ENCODE measurements at regions of chr1 and their contacts with region 1.

Region 1: GRCh38 chr1:24688621-24689195 is 45.6 kb downstream of the SRRM1 start:
- DNase-seq: peak; percentile 80
- H3K4me3 Mint-ChIP-seq: no peak overlapping the region
- H3K27ac Mint-ChIP-seq: peak overlapping the region; percentile 13
- H3K4me1 Mint-ChIP-seq: peaks cover 9% of the 10 kb centered on the region
- H3K27me3 Mint-ChIP-seq: no peaks in the 10 kb centered on the region
- CTCF ChIP-seq: peak; percentile 87

Region 2: DNA sequence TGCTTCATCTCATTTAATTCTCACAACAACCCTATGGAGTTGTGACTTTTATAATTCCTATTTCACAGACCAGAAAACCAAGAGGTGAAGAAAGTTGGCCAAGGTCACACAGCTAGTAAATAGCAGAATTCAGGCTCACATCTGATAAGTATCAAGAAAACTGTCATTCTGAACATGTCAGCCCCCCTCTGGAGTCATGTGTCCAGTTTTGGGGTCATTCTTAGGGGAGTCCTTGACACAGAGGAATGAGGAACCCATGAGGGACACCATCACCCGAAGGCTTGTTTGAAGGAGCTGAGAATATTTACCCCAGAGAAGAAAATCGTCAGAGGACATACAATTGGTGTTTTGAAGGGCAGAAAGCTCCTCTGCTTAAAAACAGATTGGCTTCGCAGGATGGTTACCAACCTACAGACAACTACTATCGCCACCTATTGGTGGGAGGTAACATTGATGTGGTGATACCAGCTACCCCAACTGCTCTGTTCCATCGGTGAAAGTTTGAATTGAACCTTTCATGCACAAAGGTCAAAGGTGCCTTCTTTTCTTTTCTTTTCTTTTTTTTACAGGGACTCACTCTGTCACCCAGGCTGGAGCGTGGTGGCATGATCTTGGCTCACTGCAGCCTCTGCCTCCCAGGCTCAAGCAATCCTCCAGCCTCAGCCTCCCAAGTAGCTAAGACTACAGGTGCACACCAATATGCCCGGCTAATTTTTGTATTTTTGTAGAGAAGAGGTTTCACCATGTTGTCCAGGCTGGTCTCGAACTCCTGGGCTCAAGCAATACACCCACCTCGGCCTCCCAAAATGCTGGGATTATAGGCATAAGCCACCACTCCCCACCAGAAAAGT is 101.5 kb before region 1 on chr1:
- CTCF ChIA-PET with region 1: no interaction called
- POLR2A ChIA-PET with region 1: no interaction called
- intact Hi-C with region 1: no loop called
- DNase-seq: peak; percentile 72
- H3K4me3 Mint-ChIP-seq: no peak overlapping the region
- H3K27ac Mint-ChIP-seq: no peak overlapping the region
- H3K4me1 Mint-ChIP-seq: peaks cover 9% of the 10 kb centered on the region
- H3K27me3 Mint-ChIP-seq: no peaks in the 10 kb centered on the region
- CTCF ChIP-seq: peak; percentile 70

Region 3: DNA sequence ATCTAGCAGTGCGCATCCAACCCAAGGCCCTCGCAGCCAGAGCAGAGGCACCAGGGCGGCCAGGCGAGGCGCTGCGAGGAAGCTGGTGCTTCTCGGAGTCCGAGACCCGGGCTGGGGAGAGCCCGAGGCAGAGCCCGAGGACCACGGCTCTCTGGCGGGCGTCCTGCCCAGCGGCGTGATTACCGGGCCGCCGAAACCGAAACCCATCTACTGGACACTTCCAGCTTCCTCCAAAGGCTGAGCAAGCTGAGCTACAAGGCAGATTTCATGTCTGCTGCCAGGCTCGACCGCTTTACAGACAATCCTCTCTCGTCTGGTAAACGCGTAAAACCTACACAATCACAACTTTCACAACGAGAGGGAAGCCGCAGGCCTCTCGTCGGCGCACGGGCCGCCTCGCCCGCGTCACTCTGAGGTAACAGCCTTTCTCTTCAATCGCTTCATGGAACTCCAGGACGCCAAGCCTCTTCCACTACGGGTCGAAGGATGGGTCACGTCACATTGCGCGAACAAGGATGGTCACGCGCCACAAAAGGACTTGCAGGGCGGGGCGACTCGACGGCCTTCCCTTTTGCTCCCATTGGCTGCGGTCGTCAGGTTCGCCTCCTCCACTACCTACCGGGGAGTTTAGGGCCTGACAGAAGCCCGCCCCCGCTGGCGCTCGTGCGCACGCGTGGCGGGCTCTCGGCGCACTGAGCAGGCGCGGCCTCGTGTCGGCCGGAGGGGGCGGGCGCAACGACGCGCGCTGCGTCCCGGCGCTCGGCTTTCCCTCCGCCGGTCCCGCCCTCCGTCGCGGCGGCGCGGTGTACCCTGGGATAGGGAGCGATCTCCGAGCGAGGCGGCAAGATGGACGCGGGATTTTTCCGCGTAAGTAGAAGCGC is 46.0 kb before region 1 on chr1 and contains the start of gene SRRM1:
- CTCF ChIA-PET with region 1: interaction called, 4 read pairs
- POLR2A ChIA-PET with region 1: interaction called, 18 read pairs
- intact Hi-C with region 1: no loop called
- DNase-seq: peak; percentile 100
- H3K4me3 Mint-ChIP-seq: peak within 1 kb of the TSS; percentile 98
- H3K27ac Mint-ChIP-seq: peak within 1 kb of the TSS; percentile 99
- H3K4me1 Mint-ChIP-seq: peaks cover 25% of the 10 kb centered on the region
- H3K27me3 Mint-ChIP-seq: no peaks in the 10 kb centered on the region
- CTCF ChIP-seq: no peak
- total RNA-seq, gene SRRM1: 154 and 171 TPM in 2 replicates

Region 4: DNA sequence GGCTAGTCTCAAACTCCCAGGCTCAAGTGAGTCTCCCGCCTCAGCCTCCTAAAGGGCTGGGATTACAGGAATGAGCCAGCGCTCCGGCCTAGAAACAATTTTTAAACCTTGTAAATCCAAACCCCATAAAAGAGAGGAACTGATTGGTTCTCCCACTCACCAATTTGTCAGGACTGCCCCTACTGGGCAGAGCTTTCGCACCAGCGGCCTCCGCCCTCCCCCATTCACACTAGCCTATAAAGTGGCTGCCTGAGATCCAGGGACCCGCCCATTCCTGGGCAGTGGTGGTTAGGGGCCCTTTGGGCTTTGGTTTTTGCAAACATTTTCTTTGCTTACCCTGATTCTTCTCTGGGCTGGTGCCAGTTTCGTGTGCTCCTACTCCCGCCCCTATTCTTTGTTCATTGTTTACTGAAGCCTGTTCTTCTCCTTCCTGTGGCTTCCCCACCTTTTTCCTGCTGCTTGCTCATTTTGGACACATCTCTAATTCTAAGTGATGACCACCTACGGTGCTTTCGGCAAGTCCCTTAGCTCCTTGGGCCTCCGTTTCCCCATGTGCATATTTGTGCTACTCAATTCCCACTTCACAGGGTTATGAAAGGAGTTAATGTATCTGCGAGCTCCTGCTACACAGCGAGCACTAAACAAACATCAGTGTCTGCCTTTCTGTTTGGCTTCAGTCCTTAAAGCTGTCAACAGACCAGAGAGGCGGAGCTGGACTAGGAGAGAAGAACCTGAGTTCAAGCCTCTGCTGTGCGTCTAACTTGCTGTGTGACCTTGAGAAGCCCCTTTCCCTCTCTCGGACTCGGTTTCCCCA is 16.8 kb after region 1 on chr1:
- CTCF ChIA-PET with region 1: interaction called, 47 read pairs
- POLR2A ChIA-PET with region 1: interaction called, 3 read pairs
- intact Hi-C with region 1: no loop called
- DNase-seq: peak; percentile 98
- H3K4me3 Mint-ChIP-seq: peak overlapping the region; percentile 43
- H3K27ac Mint-ChIP-seq: peak overlapping the region; percentile 68
- H3K4me1 Mint-ChIP-seq: peaks cover 19% of the 10 kb centered on the region
- H3K27me3 Mint-ChIP-seq: no peaks in the 10 kb centered on the region
- CTCF ChIP-seq: no peak

Region 5: DNA sequence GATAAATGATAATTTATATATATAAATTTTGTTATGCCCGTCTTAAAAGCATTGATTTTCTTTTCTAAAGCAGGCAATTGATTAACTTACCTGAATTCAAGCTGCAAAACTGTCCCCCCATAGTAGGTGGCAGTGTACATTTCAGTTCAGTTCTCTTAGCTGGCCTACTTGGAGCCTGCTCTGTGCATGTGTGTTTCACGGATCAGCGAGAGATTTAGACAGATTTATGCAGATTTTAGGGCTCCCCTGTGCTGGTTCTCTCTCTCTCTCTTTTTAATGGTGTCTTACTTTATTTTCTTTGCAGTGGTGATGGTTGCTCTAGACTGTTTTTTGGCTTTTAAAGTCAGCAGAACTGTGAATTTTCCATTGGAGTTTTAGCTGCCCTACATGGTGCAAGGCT is 87.2 kb after region 1 on chr1:
- CTCF ChIA-PET with region 1: interaction called, 10 read pairs
- POLR2A ChIA-PET with region 1: no interaction called
- intact Hi-C with region 1: no loop called
- DNase-seq: no peak
- H3K4me3 Mint-ChIP-seq: no peak overlapping the region
- H3K27ac Mint-ChIP-seq: peak overlapping the region; percentile 59
- H3K4me1 Mint-ChIP-seq: peaks cover 10% of the 10 kb centered on the region
- H3K27me3 Mint-ChIP-seq: no peaks in the 10 kb centered on the region
- CTCF ChIP-seq: no peak

Measured in MCF 10A (cell line).